ENCODE measurements at regions of chr9 and their contacts with region 1.

Region 1: GRCh38 chr9:94879230-94879629 is 152.7 kb downstream of the AOPEP start:
- DNase-seq: no peak
- H3K4me3 Mint-ChIP-seq: no peak overlapping the region
- H3K27ac Mint-ChIP-seq: peak overlapping the region; percentile 26
- H3K4me1 Mint-ChIP-seq: peaks cover 23% of the 10 kb centered on the region
- H3K27me3 Mint-ChIP-seq: peaks cover 44% of the 10 kb centered on the region

Region 2: GRCh38 chr9:94821098-94821887 is 57.9 kb before region 1 on chr9:
- intact Hi-C with region 1: no loop called
- DNase-seq: no peak
- H3K4me3 Mint-ChIP-seq: no peak overlapping the region
- H3K27ac Mint-ChIP-seq: peak overlapping the region; percentile 7
- H3K4me1 Mint-ChIP-seq: peaks cover 9% of the 10 kb centered on the region
- H3K27me3 Mint-ChIP-seq: no peaks in the 10 kb centered on the region

Region 3: GRCh38 chr9:94894111-94894699 is 15.0 kb after region 1 on chr9:
- intact Hi-C with region 1: loop called (anchors 2 kb)
- DNase-seq: no peak
- H3K4me3 Mint-ChIP-seq: no peak overlapping the region
- H3K27ac Mint-ChIP-seq: no peak overlapping the region
- H3K4me1 Mint-ChIP-seq: peaks cover 7% of the 10 kb centered on the region
- H3K27me3 Mint-ChIP-seq: peaks cover 8% of the 10 kb centered on the region

Region 4: DNA sequence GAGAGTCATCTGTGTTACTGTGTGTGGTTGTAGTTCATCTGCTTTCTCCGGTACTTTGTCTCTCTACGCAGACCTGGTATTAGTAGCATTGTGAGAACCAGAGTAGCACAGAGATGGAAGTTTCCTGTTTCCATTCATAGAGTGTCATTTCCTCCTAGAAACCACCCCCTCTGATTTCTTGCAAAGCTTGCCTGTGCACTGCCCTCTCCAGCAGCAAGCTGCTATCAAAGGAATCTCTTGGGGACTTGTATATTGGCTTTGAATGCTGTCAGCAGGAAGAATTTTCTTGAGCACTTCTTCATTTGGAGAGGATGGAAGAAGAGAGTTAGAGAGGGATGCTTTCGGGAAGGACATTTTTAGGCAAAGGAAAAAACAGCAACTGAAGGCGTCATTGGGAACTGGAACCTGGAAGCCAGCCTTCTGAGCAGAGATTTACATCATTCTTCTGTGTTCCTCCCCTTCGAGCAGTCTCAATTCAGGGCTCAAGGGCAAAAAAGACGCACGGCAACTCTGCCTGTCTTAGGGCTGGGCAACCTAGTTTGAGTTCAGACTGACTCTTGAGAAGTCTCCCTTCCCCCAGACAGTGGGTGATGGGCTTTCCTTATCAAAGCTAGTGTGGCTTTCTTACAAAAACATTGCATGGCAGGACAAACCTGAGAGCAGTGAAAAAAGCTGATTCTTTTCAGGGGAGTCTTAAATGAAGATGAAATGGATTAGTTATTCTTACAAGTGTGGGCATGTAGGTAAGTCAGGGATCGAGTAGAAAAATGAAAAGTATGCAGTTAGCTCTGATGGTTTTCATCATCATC is 73.5 kb after region 1 on chr9:
- intact Hi-C with region 1: loop called (anchors 2 kb)
- DNase-seq: no peak
- H3K4me3 Mint-ChIP-seq: no peak overlapping the region
- H3K27ac Mint-ChIP-seq: no peak overlapping the region
- H3K4me1 Mint-ChIP-seq: peaks cover 31% of the 10 kb centered on the region
- H3K27me3 Mint-ChIP-seq: no peaks in the 10 kb centered on the region

Measured in activated T-helper 2 cell treated with anti-CD3 and anti-CD28 coated beads, Interferon-gamma antibody, Interleukin-2, Interleukin-4, amounts not matched to agents 10 μg/mL and 5 μg/mL and 100 μg/mL, durations not matched to agents 14 hours and 24 hours and 36 hours (primary cell).